Activated naive CD4-positive, alpha-beta T cell treated with anti-CD3 and anti-CD28 coated beads for 36 hours (primary cell): ENCODE measurements at regions of chr9 and their contacts with region 1.

Region 1: DNA sequence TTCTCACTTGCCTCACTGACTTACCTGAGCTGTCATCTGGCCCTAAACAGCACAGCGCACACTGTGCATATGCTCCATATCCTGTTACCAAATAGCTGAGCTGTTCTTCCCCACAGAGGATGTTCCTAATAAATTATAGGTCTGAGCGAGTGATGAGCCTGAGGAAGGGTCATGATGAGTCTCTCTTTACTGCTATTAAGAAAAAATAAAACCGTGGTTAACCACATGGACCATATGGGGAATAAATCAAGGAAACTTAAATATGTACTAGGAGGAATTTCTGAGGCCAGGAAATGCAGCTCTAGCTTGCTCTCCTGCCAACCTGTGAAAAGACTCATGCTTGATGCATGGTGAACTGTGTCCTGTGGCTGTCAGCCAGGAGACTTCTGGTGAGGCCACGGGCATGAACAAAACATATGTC is 424.8 kb upstream of the DMAC1 start:
- DNase-seq: no peak
- H3K4me3 Mint-ChIP-seq: no peak overlapping the region
- H3K27ac Mint-ChIP-seq: no peak overlapping the region
- H3K4me1 Mint-ChIP-seq: no peaks in the 10 kb centered on the region
- H3K27me3 Mint-ChIP-seq: no peaks in the 10 kb centered on the region

Region 2: GRCh38 chr9:8140557-8140956 is 83.8 kb before region 1 on chr9:
- CTCF ChIA-PET with region 1: no interaction called
- intact Hi-C with region 1: loop called (anchors 10 kb)
- DNase-seq: no peak
- H3K4me3 Mint-ChIP-seq: no peak overlapping the region
- H3K27ac Mint-ChIP-seq: no peak overlapping the region
- H3K4me1 Mint-ChIP-seq: peaks cover 8% of the 10 kb centered on the region
- H3K27me3 Mint-ChIP-seq: no peaks in the 10 kb centered on the region

Region 3: GRCh38 chr9:8533681-8534080 is 309.3 kb after region 1 on chr9:
- CTCF ChIA-PET with region 1: no interaction called
- intact Hi-C with region 1: no loop called
- DNase-seq: no peak
- H3K4me3 Mint-ChIP-seq: no peak overlapping the region
- H3K27ac Mint-ChIP-seq: no peak overlapping the region
- H3K4me1 Mint-ChIP-seq: no peaks in the 10 kb centered on the region
- H3K27me3 Mint-ChIP-seq: no peaks in the 10 kb centered on the region